MCF 10A (cell line): ENCODE measurements at regions of chr20 and their contacts with region 1.

Region 1: DNA sequence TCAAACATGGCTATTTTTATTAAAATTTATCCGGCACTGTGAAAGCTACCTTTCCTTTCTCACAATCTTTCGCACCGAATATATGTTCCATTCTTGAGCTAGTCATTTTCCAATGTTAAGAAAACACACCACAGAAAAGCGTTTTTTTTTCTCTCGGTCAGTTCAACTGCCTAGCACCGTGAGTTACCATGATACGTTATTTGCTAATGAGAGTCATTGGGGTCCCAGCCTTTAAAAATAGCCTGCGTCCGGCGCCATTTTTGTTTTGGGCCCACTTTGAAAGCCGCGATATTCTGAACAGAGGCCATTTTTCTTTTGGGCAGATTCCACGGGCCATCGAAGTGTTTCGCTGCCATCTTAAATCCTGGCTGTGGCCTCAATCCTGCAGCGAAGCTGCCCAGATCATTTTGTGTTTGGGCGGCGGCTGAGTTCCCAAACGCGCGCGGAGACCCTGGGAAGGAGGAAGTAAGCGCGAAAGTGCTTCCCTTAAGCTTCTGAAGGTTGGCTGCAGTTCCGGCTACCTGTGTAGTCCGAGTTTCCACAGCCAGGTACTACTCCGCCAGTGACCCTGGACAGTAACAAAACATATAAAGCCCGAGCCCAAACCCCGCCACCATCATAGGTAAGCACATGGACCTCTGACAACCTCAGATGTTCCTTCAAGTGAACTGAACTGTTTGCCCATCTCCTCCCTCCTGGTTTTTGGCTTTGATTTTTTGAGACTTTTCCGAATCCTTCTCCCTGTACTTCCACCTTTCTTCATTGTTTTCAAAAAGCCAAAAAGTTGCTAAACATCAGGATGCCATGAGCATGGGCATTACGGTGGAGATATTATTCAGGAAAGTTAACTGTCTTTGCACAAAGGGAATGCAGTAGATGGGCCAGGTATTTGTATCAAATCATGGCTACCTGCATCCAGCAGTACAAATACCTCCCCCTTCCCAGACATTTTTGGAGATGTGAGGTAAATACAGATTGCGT is at the start of gene SLX4IP:
- DNase-seq: peak; percentile 97
- H3K4me3 Mint-ChIP-seq: peak within 1 kb of the TSS; percentile 86
- H3K27ac Mint-ChIP-seq: peak within 1 kb of the TSS; percentile 94
- H3K4me1 Mint-ChIP-seq: peaks cover 12% of the 10 kb centered on the region
- H3K27me3 Mint-ChIP-seq: no peaks in the 10 kb centered on the region
- CTCF ChIP-seq: no peak
- total RNA-seq, gene SLX4IP: 11.2 and 12.9 TPM in 2 replicates

Region 2: DNA sequence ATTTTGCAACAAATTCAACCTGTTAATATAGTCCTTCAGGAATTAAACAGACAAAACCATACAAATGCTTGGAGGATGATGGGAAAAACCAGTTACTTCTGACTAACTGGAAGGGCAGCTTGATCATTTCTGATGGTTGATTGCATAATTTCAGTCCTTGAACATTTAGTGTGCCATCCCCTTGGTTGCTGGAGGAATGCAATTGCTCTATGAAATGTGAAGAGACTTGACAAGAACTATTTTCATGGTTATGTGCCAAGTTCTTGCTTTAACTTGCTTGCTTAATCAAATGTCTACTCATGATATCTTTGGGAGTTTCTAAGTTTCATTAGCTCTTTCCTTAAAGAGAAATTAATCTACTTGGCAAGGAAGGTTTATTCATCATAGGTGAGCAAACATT is 355.2 kb before region 1 on chr20:
- CTCF ChIA-PET with region 1: interaction called, 3 read pairs
- POLR2A ChIA-PET with region 1: interaction called, 26 read pairs
- intact Hi-C with region 1: no loop called
- DNase-seq: peak; percentile 91
- H3K4me3 Mint-ChIP-seq: no peak overlapping the region
- H3K27ac Mint-ChIP-seq: no peak overlapping the region
- H3K4me1 Mint-ChIP-seq: peaks cover 41% of the 10 kb centered on the region
- H3K27me3 Mint-ChIP-seq: no peaks in the 10 kb centered on the region
- CTCF ChIP-seq: no peak

Region 3: DNA sequence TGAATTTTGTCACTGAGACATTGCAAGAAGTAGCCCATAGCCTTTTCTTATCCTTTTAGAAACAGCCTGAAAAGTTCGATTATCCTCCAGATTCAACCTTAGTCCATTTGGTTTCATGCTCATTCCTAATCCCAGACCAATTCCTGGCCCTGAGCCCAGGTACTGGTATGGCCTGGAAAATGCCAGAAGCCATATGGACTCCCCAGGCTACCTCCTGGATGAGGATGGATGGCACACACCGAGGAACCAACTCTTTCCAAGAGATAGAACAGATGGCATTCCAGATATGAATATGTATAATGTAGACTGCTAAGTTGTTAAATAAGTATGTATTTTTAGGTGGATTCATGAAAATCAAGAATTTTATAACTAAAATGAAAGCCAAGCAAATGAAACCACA is 268.1 kb before region 1 on chr20:
- CTCF ChIA-PET with region 1: no interaction called
- POLR2A ChIA-PET with region 1: no interaction called
- intact Hi-C with region 1: no loop called
- DNase-seq: no peak
- H3K4me3 Mint-ChIP-seq: no peak overlapping the region
- H3K27ac Mint-ChIP-seq: no peak overlapping the region
- H3K4me1 Mint-ChIP-seq: no peaks in the 10 kb centered on the region
- H3K27me3 Mint-ChIP-seq: peaks cover 64% of the 10 kb centered on the region
- CTCF ChIP-seq: no peak

Region 4: DNA sequence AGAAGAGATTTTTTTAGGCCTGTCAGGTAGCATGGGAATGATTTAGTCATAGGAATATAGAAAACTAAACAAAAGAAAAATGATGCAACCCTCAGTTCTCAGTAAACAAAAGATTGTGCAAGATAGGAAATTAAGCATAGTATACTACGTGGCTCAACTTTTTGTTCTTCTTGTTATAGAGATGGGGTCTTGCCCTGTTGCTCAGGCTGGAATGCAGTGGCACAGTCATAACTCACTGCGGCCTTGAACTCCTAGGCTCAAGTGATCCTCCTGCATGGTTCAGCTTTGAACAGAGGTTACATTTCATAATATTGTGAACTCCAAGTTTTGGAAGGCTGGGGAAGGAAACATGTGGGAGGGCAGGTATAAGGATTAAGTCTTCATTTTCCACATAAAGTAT is 28.5 kb after region 1 on chr20:
- CTCF ChIA-PET with region 1: interaction called, 3 read pairs
- POLR2A ChIA-PET with region 1: interaction called, 11 read pairs
- intact Hi-C with region 1: no loop called
- DNase-seq: peak; percentile 39
- H3K4me3 Mint-ChIP-seq: no peak overlapping the region
- H3K27ac Mint-ChIP-seq: no peak overlapping the region
- H3K4me1 Mint-ChIP-seq: peaks cover 7% of the 10 kb centered on the region
- H3K27me3 Mint-ChIP-seq: no peaks in the 10 kb centered on the region
- CTCF ChIP-seq: no peak

Region 5: GRCh38 chr20:10536531-10536930 is 101.4 kb after region 1 on chr20:
- CTCF ChIA-PET with region 1: interaction called, 10 read pairs
- POLR2A ChIA-PET with region 1: interaction called, 59 read pairs
- intact Hi-C with region 1: no loop called
- DNase-seq: peak; percentile 71
- H3K4me3 Mint-ChIP-seq: no peak overlapping the region
- H3K27ac Mint-ChIP-seq: no peak overlapping the region
- H3K4me1 Mint-ChIP-seq: peaks cover 31% of the 10 kb centered on the region
- H3K27me3 Mint-ChIP-seq: no peaks in the 10 kb centered on the region
- CTCF ChIP-seq: peak; percentile 44

Region 6: DNA sequence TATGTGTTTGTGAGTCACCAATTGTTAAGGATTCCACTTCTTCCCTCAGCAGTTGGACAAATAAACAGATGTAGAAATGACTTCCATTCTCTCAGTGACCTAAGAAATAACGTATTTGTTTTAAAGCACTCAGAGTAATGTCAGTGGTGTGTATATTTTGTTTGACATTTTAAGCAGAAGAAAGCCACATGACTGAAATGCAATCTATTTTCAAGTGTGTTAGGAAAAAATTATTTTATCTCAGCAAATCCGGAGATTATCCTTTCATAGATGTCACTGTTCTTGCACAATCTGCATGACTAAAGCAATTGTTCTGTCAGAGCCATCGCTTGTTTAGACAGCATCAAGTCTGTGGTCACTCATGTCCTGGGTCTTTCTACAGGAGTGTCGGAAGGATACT is 161.6 kb after region 1 on chr20:
- CTCF ChIA-PET with region 1: no interaction called
- POLR2A ChIA-PET with region 1: interaction called, 21 read pairs
- intact Hi-C with region 1: no loop called
- DNase-seq: peak; percentile 88
- H3K4me3 Mint-ChIP-seq: peak overlapping the region; percentile 2
- H3K27ac Mint-ChIP-seq: peak overlapping the region; percentile 5
- H3K4me1 Mint-ChIP-seq: peaks cover 33% of the 10 kb centered on the region
- H3K27me3 Mint-ChIP-seq: no peaks in the 10 kb centered on the region
- CTCF ChIP-seq: no peak